AG04450 (cell line): ENCODE measurements at regions of chr11 and their contacts with region 1.

Region 1: DNA sequence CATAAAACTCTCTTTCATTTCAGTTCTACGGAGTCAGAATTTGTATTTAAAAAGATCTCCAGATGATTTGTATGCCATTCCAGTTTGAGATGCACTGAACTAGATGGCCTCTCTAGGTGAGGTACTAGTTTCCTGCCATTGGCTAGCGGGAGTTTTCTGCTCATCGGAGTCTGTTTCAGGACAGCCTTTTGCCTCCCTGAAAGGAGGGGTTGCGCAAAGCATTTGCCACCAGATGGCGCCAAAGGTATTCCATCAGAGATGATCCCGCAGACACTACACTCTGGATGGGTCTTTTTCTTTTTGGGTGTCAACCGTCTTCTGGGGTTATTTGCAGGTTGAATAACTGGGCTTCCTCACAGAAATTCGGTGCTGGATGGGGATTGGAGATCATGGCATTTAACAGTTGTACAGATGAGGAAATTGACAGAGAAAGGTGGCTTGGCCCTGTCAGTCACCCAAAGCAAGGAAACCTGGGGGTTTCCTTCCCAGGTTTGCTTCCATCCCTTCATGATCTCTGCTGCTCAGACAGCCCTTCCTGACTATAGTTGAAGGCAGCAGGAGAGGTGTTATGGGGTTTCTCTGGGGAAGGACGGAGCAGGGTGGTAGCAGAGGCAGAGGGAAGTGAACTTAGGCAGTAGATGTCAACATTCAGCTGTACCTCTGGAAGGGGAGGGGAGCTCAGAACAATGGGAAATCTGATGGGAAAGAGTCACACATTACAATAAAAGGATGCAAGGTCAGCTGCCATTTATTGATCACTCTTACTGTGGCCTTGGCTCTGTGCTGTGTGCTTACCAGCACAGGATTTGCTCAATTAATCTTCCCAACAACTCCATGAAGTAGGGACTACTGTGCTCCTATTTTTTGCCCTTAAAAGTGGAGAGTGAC is 81.6 kb downstream of the CCDC81 start:
- DNase-seq: peak; percentile 66
- H3K4me3 ChIP-seq: no peak overlapping the region
- H3K27ac ChIP-seq: no peak overlapping the region
- H3K27me3 ChIP-seq: no peaks in the 10 kb centered on the region
- CTCF ChIP-seq: peak; percentile 93

Region 2: GRCh38 chr11:86818466-86819192 is 362.3 kb after region 1 on chr11:
- CTCF ChIA-PET with region 1: interaction called, 15 read pairs
- POLR2A ChIA-PET with region 1: no interaction called
- DNase-seq: peak; percentile 57
- H3K4me3 ChIP-seq: no peak overlapping the region
- H3K27ac ChIP-seq: no peak overlapping the region
- H3K27me3 ChIP-seq: no peaks in the 10 kb centered on the region
- CTCF ChIP-seq: peak; percentile 64

Region 3: GRCh38 chr11:86919557-86920210 is 463.4 kb after region 1 on chr11:
- CTCF ChIA-PET with region 1: interaction called, 12 read pairs
- POLR2A ChIA-PET with region 1: no interaction called
- DNase-seq: peak; percentile 59
- H3K4me3 ChIP-seq: no peak overlapping the region
- H3K27ac ChIP-seq: no peak overlapping the region
- H3K27me3 ChIP-seq: no peaks in the 10 kb centered on the region
- CTCF ChIP-seq: peak; percentile 81